Lower lobe of right lung (tissue), 2 donors: ENCODE measurements at regions of chr2 and their contacts with region 1.

Region 1: DNA sequence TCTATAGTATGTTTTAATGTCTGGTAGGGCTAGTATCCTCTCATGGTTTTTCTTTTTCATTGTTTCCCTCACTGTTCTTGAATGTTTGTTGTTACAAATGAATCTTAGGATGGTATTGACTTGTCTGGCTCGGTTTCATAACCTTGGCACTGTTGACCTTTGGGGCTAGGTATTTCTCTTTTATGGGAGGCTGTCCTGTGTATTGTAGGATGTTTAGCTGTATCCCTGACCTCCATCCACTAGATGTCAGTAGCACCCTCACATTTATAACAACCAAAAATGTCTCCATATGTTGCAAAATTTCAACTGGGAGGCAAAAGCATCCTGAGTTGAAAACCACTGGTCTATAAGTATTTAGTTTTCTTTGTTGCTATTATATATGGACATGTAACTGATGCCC is 7.0 kb upstream of the AOX1 start:
- DNase-seq: no peak
- ATAC-seq: peak; percentile 60 to 63
- H3K4me3 ChIP-seq: no peak overlapping the region
- H3K27ac ChIP-seq: no peak overlapping the region
- H3K4me1 ChIP-seq: no peaks in the 10 kb centered on the region
- H3K27me3 ChIP-seq: no peaks in the 10 kb centered on the region
- CTCF ChIP-seq: peak; percentile 46

Region 2: DNA sequence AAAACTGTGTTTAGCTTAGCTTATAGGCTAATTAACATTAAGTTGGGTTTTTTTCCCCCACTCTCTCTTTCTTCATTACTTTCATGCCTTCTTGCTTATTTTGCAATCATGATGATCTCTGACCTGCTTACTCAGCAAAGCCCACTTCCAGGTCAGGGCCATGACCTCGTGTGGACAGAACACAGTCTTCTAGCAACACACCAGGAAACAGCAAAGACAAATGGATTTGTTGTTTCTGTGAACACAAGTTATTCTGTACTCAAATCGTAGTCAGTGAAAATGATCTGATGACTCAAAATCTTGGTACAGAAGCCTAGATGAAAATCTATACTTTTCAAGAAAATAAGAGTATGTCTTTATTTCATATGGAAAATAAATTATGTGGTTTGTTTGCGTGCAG is 211.6 kb before region 1 on chr2:
- intact Hi-C with region 1: no loop called
- DNase-seq: no peak
- ATAC-seq: peak; percentile 40 to 43
- H3K4me3 ChIP-seq: no peak overlapping the region
- H3K27ac ChIP-seq: no peak overlapping the region
- H3K4me1 ChIP-seq: peaks cover 13% of the 10 kb centered on the region
- H3K27me3 ChIP-seq: no peaks in the 10 kb centered on the region
- CTCF ChIP-seq: no peak

Region 3: GRCh38 chr2:200483729-200484198 is 95.0 kb before region 1 on chr2:
- intact Hi-C with region 1: no loop called
- DNase-seq: peak; percentile 71
- ATAC-seq: peak; percentile 73 to 85
- H3K4me3 ChIP-seq: no peak overlapping the region
- H3K27ac ChIP-seq: no peak overlapping the region
- H3K4me1 ChIP-seq: peaks cover 10% of the 10 kb centered on the region
- H3K27me3 ChIP-seq: no peaks in the 10 kb centered on the region
- CTCF ChIP-seq: peak; percentile 50

Region 4: DNA sequence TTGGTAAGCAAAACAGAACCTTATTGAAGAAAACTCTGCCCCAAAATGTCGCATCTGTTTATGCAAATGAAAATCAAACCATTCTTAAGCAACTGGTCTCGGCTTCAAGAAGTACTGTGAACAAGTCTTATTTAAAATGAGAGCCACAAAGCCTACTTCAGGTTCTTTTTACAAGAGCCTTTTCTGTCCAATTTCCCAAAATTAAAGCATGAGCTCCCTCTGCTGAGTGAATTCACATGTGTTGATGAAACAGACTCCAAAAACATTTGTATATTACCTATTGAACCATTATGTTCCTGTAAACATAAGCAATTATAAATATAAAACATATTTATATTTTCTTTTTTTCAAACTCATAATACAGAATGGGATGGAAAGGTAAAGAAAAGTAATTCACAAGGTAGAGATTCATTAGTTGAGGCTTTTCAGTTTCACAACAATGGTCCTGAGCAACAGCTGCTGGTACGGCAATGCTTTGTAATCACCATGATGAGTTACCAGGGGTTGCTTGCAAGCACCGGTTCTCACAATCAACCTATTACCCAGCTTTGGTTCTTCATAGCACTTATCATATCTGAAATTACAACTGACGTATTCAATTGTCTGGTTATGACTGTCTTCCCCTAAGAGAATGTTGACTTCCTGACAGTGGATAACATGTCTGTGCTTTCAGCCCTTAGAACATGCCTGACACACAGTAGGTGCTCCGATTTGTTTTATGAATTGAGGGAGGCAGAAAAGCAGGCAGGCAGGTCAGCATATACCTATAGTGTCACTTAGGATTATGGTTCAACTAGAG is 124.5 kb after region 1 on chr2:
- intact Hi-C with region 1: loop called (anchors 5 kb)
- DNase-seq: no peak
- ATAC-seq: peak; percentile 65 to 73
- H3K4me3 ChIP-seq: no peak overlapping the region
- H3K27ac ChIP-seq: no peak overlapping the region
- H3K4me1 ChIP-seq: peaks cover 4% of the 10 kb centered on the region
- H3K27me3 ChIP-seq: no peaks in the 10 kb centered on the region
- CTCF ChIP-seq: peak; percentile 55

Region 5: GRCh38 chr2:201021914-201022313 is 443.1 kb after region 1 on chr2:
- intact Hi-C with region 1: no loop called
- DNase-seq: no peak
- ATAC-seq: no peak
- H3K4me3 ChIP-seq: no peak overlapping the region
- H3K27ac ChIP-seq: no peak overlapping the region
- H3K4me1 ChIP-seq: no peaks in the 10 kb centered on the region
- H3K27me3 ChIP-seq: no peaks in the 10 kb centered on the region
- CTCF ChIP-seq: no peak